Activated CD8-positive, alpha-beta memory T cell treated with anti-CD3 and anti-CD28 coated beads, Interleukin-2, amount 10 ng/mL, durations not matched to agents 7 days and 5 days (primary cell): ENCODE measurements at regions of chr2 and their contacts with region 1.

Region 1: GRCh38 chr2:231463698-231464575 is at the start of gene NCL:
- DNase-seq: peak; percentile 92
- ATAC-seq: peak; percentile 93
- H3K4me3 Mint-ChIP-seq: peak within 1 kb of the TSS; percentile 87
- H3K27ac Mint-ChIP-seq: peak within 1 kb of the TSS; percentile 100
- H3K4me1 Mint-ChIP-seq: peaks cover 46% of the 10 kb centered on the region
- H3K27me3 Mint-ChIP-seq: no peaks in the 10 kb centered on the region
- total RNA-seq, gene NCL: 634 to 820 TPM

Region 2: DNA sequence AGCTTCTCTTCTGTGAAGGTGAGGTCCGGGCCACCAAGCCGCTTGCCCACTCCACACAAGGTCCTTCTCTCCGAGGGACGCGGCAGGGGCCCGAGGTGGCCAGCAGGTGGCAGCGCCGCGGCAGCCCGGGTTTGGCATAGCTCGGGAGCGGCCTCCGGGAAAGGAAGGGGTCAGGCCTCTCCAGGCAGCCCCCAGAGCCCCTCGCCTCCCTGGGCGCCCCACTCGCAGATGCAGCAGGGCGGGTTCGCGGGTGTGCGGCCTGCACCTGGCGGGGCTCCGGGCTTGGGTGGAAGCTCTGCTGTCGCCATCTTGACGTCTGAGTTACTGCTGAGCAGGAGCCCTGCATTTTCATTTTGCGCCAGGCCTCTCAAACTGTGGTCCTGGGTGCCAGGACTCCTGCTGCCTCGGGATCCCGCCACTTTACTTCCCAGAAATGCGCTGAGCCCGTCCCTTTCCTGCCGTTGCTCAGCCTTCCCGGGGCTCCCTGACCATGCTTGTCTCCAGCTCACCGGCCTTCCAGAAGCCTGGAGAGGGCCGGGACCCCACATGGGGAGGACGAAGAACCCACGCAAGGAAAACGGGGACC is 19.0 kb after region 1 on chr2:
- CTCF ChIA-PET with region 1: interaction called, 91 read pairs
- DNase-seq: peak; percentile 84
- ATAC-seq: peak; percentile 88
- H3K4me3 Mint-ChIP-seq: peak overlapping the region; percentile 74
- H3K27ac Mint-ChIP-seq: peak overlapping the region; percentile 85
- H3K4me1 Mint-ChIP-seq: peaks cover 13% of the 10 kb centered on the region
- H3K27me3 Mint-ChIP-seq: no peaks in the 10 kb centered on the region